IMR-90 (cell line): ENCODE measurements at regions of chr3 and their contacts with region 1.

Region 1: DNA sequence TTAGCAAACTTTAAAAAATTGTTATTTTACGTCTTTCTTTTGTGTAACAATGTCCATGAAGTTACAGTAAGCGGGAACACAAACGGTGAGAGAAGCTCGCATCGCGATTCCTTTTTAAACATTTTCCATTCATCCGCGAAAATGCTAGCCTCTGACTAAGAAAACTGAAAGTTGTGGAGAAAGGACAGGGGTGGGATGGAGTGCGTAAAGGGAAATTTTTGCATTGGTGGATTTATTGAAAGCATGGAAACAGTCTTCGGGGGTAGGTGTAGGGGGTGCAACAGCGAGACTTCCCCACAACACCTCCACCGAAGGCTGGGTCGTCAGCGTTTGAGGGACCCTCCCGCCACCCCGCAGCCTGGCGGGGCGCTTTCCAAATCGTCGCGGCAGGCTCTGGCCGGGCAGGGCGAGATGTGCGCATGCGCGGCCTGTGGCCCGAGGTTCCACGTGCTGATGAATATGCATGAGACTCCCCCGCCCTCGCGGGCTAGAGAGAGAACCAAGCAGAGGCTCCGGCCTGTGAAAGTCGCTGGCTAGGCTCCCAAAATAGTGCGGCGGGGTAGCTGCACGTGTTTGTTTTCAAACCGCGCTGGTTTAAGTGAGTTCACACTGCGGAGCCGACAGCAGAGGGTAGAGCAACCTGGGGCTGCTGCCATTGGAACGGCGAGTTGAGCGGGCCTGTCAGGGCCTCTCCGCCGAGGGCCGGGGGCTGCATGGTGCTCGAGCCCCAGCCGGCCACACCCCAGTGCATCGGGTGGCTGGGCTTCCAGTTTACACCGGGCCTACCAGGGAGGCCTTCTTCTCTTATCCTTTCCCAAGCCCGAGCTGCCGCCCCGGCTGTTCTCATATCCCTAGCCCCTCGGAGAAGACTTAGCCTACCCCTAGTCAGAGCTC is 9.9 kb downstream of the ZIC1 start:
- DNase-seq: peak; percentile 15
- ATAC-seq: peak; percentile 46; the same call in 1 of the 2 replicates
- H3K4me3 ChIP-seq: peak overlapping the region; percentile 23
- H3K27ac ChIP-seq: no peak overlapping the region
- H3K4me1 ChIP-seq: no peaks in the 10 kb centered on the region
- H3K27me3 ChIP-seq: peaks cover 79% of the 10 kb centered on the region
- CTCF ChIP-seq: no peak
- POLR2A ChIP-seq: no peak
- RAD21 ChIP-seq: no peak

Region 2: GRCh38 chr3:146421889-146422288 is 997.2 kb before region 1 on chr3:
- CTCF ChIA-PET with region 1: no interaction called
- POLR2A ChIA-PET with region 1: no interaction called
- dilution Hi-C with region 1: no loop called
- in situ Hi-C with region 1: no loop called
- intact Hi-C with region 1: loop called (anchors 5 kb)
- DNase-seq: peak; percentile 82
- ATAC-seq: peak; percentile 90
- H3K4me3 ChIP-seq: no peak overlapping the region
- H3K27ac ChIP-seq: no peak overlapping the region
- H3K4me1 ChIP-seq: no peaks in the 10 kb centered on the region
- H3K27me3 ChIP-seq: no peaks in the 10 kb centered on the region
- CTCF ChIP-seq: no peak
- POLR2A ChIP-seq: no peak
- RAD21 ChIP-seq: no peak

Region 3: DNA sequence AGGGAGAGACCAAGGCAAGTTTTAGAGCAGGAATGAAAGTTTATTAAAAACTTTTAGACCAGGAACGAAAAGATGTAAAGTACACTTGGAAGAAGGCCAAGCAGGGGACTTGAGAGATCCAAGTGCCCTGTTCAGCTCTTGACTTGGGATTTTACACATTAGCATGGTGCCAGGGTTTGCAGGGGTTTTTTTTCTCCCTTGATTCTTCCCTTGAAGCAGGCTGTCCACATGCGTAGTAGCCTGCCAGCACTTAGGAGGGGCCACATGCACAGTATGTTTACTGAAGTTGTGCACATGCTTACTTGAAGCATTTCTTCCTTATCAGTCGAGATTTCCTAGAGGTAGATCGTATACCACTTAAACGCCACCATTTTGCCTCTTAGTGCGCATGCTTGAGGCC is 1001.2 kb after region 1 on chr3:
- CTCF ChIA-PET with region 1: no interaction called
- POLR2A ChIA-PET with region 1: no interaction called
- dilution Hi-C with region 1: no loop called
- in situ Hi-C with region 1: no loop called
- intact Hi-C with region 1: no loop called
- DNase-seq: no peak
- ATAC-seq: no peak
- H3K4me3 ChIP-seq: no peak overlapping the region
- H3K27ac ChIP-seq: no peak overlapping the region
- H3K4me1 ChIP-seq: no peaks in the 10 kb centered on the region
- H3K27me3 ChIP-seq: no peaks in the 10 kb centered on the region
- CTCF ChIP-seq: no peak
- POLR2A ChIP-seq: no peak
- RAD21 ChIP-seq: no peak